Cardiac septum (tissue), 1 donor: ENCODE measurements at regions of chr3 and their contacts with region 1.

Region 1: DNA sequence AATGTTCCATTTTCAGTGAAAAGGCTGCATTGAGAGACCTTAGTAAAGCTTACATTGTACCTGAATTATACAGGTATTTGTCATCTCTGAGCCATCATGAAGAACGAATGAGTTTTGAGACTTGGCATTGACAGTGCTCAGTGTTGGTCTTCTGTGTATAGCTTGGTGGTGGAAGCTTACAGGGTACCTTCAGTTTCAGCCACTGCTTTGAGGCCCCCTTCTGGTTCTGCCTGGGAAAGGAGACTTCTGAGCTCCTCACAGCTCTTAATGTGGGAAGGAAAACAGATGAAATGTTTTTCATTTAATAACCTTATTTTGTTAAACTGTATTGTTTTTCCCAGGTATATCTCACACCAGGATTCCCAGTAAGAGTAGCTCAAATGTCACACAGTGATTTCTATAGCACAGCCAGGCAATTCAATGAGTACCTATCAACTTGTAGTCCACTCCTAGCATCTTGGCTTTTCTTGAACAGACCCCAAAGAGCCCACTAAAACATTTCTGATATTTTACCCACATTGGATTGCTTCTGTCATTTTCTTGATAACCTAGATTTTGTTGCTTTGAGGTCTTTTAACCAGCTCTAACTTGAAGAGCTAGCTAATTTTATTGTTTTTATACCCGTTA is 5.6 kb downstream of the SERPINI1 start:
- DNase-seq: no peak

Region 2: DNA sequence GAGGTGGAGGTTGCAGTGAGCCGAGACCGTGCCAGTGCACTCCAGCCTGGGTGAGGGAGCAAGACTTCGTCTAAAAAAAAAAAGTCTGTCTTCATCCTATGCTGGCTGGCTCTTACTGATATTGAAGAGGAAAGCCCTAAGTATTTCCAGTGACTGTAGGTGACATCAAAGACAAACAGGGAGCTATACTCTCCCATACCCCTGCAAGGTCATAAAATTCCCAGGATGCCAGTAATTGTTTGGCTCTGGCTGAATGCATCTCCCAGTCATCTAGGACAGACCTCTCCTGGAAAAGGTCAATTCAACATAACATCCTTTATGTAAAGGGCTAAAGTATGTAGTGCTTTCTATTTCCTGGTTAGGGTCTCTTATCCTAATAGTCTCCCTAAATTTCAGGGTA is 368.9 kb before region 1 on chr3:
- intact Hi-C with region 1: no loop called
- DNase-seq: no peak

Region 3: DNA sequence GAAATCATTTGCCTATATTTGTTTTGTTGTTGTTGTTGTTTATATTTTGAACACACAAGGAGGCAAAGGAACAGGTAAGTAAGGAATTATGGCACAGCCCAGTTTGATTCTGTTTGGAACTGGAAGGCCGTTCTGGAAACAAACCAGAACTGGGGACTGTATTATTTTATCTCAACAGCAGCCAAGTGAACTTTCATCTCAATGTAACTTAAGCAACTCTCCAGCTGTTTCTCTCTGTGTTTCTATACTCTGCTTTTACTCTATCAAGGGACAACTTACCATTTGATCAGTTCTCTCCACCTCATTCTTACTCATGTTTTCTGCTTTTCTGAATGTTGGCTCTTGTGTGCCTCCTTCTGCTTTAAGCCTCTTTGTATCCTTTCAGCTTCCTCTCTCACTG is 71.4 kb before region 1 on chr3:
- intact Hi-C with region 1: no loop called
- DNase-seq: no peak

Region 4: DNA sequence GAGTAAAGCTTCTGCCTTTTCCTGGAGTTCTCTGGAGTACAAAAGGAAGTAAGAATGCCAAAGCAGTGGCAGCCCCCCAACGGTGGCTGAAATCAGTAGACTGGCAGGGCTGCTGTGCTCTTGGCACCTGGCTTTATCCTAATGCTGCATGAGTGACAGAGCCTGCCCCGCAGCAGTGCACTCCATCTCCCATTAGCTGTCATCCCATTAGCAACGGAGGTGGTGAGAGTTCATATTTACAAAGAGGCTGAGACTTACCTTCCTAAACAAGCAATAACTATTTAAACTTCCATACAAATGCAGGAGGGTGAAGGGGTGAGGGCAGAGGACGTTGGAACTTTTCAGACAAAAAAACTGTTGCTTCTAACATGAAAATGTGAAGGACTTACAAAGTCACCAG is 46.4 kb after region 1 on chr3:
- intact Hi-C with region 1: loop called (anchors 5 kb)
- DNase-seq: no peak